Activated CD4-positive, alpha-beta T cell treated with anti-CD3 and anti-CD28 coated beads, Interleukin-2, amount 10 ng/mL, durations not matched to agents 24 days and 14 days (primary cell): ENCODE measurements at regions of chr19 and their contacts with region 1.

Region 1: GRCh38 chr19:33176670-33177416 is 17.3 kb upstream of the LRP3 start:
- DNase-seq: peak; percentile 99
- H3K4me3 Mint-ChIP-seq: peak overlapping the region; percentile 91
- H3K27ac Mint-ChIP-seq: peak overlapping the region; percentile 99
- H3K4me1 Mint-ChIP-seq: peaks cover 33% of the 10 kb centered on the region
- H3K27me3 Mint-ChIP-seq: peaks cover 11% of the 10 kb centered on the region

Region 2: GRCh38 chr19:32580901-32581703 is 595.7 kb before region 1 on chr19 and contains the start of gene PDCD5:
- intact Hi-C with region 1: loop called (anchors 1 kb)
- DNase-seq: peak; percentile 98
- H3K4me3 Mint-ChIP-seq: peak within 1 kb of the TSS; percentile 93
- H3K27ac Mint-ChIP-seq: peak within 1 kb of the TSS; percentile 90
- H3K4me1 Mint-ChIP-seq: peaks cover 24% of the 10 kb centered on the region
- H3K27me3 Mint-ChIP-seq: peaks cover 8% of the 10 kb centered on the region
- total RNA-seq, gene PDCD5: 213 and 231 TPM in 2 replicates

Region 3: DNA sequence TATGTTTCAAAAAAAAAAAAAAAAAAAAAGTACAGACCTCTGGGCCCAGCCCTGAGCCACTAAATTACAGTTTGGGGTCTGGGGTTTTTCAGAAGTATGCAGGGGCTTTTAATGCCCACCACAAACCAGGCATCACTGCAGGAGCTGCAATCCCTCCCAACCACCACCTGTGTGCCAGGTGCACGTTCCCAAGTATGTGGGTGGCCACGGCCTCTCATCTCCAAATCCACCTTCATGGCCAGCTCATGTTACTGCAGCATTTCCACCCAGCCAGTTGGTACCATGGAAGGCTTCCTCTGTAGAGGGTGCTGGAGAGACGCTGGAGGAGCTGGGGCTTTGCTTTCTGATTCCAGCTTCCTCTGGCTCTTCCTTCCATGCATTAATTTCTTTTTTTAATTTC is 231.6 kb before region 1 on chr19:
- intact Hi-C with region 1: no loop called
- DNase-seq: no peak
- H3K4me3 Mint-ChIP-seq: no peak overlapping the region
- H3K27ac Mint-ChIP-seq: no peak overlapping the region
- H3K4me1 Mint-ChIP-seq: no peaks in the 10 kb centered on the region
- H3K27me3 Mint-ChIP-seq: no peaks in the 10 kb centered on the region

Region 4: DNA sequence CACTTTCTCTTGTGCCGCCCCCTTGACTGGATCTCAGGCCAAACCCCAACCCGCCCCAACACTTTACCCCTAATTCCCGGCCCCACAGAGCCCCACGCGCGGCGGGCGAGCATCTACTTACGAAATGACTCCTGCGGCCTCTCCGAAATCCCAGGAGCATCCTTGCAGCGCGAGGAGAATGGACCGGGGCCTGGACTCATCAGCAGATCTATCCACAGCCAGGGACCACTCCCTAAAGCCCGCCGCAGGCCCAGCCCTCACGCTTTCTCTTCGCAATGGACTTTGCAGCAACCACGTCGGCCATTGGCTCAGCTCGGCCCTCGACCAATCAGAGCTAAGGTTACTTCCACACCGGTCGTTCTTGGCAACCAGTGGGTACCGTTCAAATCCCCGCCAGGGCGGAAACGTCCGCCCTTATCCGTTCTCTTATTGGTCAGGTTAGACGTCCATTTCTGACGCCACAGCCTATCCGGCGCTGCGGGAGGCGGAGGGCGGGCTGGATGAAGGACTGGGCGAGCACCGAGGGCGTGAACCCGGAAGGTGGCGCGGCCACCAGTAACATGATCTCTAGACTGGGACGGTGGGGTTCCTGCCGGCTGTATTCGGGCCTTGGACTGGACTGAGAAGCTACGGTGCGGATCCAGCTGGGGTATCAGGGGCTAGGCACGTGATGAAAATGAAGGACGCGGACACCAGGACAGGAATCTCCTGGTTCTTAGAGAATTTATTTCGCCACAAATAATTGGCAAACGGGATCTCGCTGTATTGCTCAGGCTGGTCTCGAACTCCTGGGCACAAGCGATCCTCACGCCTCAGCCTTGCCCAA is 204.9 kb before region 1 on chr19 and contains the starts of genes CEP89 and FAAP24:
- intact Hi-C with region 1: loop called (anchors 2 kb)
- DNase-seq: peak; percentile 100
- H3K4me3 Mint-ChIP-seq: peak within 1 kb of the TSS; percentile 100
- H3K27ac Mint-ChIP-seq: peak within 1 kb of the TSS; percentile 95
- H3K4me1 Mint-ChIP-seq: peaks cover 19% of the 10 kb centered on the region
- H3K27me3 Mint-ChIP-seq: no peaks in the 10 kb centered on the region
- total RNA-seq, gene CEP89: 16.9 and 17.6 TPM in 2 replicates
- total RNA-seq, gene FAAP24: 10.0 and 10.1 TPM in 2 replicates

Region 5: DNA sequence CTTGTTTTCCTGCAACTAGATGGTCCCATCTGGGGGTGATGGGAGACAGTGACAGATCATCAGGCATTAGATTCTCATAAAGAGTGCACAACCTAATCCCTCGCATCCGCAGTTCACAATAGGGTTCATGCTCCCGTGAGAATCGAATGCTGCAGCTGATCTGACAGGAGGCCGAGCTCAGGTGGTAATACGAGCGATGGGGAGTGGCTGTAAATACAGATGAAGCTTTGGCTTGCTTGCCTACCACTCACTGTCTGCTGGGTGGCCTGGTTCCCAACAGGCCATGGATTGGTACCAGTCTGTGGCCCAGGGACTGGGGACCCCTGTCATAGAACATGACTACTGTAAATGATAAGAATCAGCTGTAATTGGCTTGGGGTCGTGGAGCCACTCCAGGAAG is 16.9 kb before region 1 on chr19:
- intact Hi-C with region 1: loop called (anchors 1 kb)
- DNase-seq: no peak
- H3K4me3 Mint-ChIP-seq: no peak overlapping the region
- H3K27ac Mint-ChIP-seq: peak overlapping the region; percentile 95
- H3K4me1 Mint-ChIP-seq: peaks cover 32% of the 10 kb centered on the region
- H3K27me3 Mint-ChIP-seq: no peaks in the 10 kb centered on the region

Region 6: DNA sequence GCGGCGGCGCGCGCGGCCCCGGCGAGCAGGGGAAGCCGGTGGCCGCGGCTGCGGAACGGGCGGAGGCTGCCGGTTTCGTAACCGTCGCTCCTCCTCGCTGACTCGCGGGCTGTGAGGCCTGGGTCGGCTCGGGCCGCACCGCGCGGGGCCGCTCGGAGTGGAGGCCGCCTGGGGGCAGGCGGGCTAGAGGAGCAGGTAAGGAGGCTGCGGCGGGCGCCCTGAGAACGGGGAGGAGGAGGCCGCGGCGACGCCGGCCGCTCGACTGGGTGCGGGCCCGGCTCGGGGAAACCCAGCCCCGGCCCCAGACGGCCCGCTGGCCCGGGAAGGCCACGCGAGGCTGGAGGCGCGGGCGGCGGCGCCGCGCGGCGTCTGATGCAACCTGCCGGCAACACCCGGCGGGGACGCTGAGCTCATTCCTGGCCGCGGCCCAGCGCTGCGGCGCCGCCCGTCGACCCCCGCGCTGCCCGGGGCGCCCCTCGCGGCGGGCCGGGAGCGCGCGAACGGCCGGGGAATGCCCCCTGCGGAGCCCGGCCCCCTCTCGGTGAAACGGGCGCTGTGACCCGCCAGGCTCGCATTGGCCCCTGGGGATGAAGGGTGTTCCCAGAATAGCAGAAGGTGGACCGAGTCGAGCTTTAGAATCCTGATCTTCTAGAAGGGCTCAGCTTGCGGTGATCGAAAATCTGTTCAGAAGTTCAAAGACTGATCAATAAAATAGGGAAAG is 197.0 kb after region 1 on chr19 and contains the start of gene CEBPG:
- intact Hi-C with region 1: loop called (anchors 1 kb)
- DNase-seq: peak; percentile 88
- H3K4me3 Mint-ChIP-seq: peak within 1 kb of the TSS; percentile 94
- H3K27ac Mint-ChIP-seq: peak within 1 kb of the TSS; percentile 80
- H3K4me1 Mint-ChIP-seq: peaks cover 39% of the 10 kb centered on the region
- H3K27me3 Mint-ChIP-seq: no peaks in the 10 kb centered on the region
- total RNA-seq, gene CEBPG: 29.7 and 29.8 TPM in 2 replicates